ENCODE measurements at regions of chr16 and their contacts with region 1.

Region 1: GRCh38 chr16:67935402-67936123 is 1.1 kb downstream of the PSMB10 start:
- DNase-seq: peak; percentile 98
- ATAC-seq: peak; percentile 91
- H3K4me3 Mint-ChIP-seq: peak overlapping the region; percentile 100
- H3K27ac Mint-ChIP-seq: peak overlapping the region; percentile 100
- H3K4me1 Mint-ChIP-seq: peaks cover 37% of the 10 kb centered on the region
- H3K27me3 Mint-ChIP-seq: no peaks in the 10 kb centered on the region

Region 2: DNA sequence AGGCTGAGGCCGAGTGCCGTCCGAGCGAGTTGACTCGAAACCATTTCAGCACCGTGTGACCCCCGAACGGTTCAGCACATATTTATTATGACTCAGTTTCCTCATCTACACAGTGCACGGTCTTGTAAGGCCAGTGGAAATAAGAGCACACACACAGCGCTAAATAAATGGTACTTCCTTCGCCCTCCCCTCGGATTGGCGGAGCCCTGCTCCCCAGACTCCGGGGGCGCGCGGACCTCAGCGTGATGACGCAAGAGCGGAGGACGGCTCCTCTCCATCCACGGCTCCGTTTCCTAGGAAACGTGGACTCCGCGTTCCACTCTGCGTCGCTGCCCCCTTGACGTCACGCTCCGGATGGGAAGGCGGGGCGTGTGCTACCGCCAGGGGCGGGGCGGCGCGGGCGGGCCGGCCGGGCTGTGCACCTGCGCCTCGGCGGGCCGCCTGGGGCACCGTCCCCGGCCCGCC is 275.0 kb before region 1 on chr16 and contains the start of gene PARD6A:
- CTCF ChIA-PET with region 1: interaction called, 3 read pairs
- POLR2A ChIA-PET with region 1: interaction called, 5 read pairs
- intact Hi-C with region 1: loop called in 1 of 2 experiments (anchors 1 kb)
- DNase-seq: peak; percentile 98
- ATAC-seq: peak; percentile 83
- H3K4me3 Mint-ChIP-seq: peak within 1 kb of the TSS; percentile 90
- H3K27ac Mint-ChIP-seq: peak within 1 kb of the TSS; percentile 91
- H3K4me1 Mint-ChIP-seq: peaks cover 21% of the 10 kb centered on the region
- H3K27me3 Mint-ChIP-seq: no peaks in the 10 kb centered on the region
- total RNA-seq, gene PARD6A: 7.8 to 8.7 TPM

Region 3: GRCh38 chr16:67806428-67807147 is 129.0 kb before region 1 on chr16 and contains the starts of genes RANBP10 and TSNAXIP1:
- CTCF ChIA-PET with region 1: interaction called, 3 read pairs
- POLR2A ChIA-PET with region 1: interaction called, 8 read pairs
- intact Hi-C with region 1: loop called in 1 of 2 experiments (anchors 1 kb)
- DNase-seq: peak; percentile 98
- ATAC-seq: peak; percentile 96
- H3K4me3 Mint-ChIP-seq: peak within 1 kb of the TSS; percentile 91
- H3K27ac Mint-ChIP-seq: peak within 1 kb of the TSS; percentile 91
- H3K4me1 Mint-ChIP-seq: peaks cover 39% of the 10 kb centered on the region
- H3K27me3 Mint-ChIP-seq: no peaks in the 10 kb centered on the region
- total RNA-seq, gene RANBP10: 15.6 to 18.0 TPM
- total RNA-seq, gene TSNAXIP1: 0.62 to 1.1 TPM

Region 4: DNA sequence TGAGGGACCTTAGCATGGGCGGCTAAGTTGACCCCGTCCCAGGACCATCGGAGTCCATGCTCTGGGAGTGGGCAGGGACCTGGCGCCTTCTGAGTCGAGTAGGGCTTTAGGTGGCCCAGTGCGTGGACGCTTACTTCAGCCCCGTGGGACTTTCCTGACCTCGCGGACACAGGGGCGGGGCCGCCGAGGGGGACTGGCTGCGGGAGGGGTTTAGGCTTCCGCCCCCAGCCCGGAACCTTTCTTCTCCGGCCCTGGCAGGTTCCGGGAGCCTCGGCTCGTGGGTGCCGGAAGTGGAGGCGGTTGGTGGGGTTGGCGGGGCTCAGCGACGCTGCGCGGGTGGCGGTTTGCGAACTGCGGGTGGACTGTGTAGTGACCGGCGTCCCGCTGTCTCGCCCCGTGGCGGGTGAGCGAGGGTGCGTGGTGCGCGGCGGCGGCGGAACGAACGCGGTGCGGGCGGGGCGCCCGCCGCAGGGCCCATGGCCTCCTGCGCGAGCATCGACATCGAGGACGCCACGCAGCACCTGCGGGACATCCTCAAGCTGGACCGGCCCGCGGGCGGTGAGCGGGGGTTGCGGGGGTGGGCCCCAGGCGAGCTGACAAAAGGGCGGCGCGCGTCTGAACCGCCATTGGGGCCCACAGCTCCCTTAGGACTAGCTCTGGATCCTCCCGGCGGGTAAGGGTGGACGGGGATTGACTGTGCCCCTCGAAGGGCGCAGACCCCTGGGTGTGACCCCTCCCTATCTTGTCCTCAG is 62.6 kb before region 1 on chr16 and contains the start of gene EDC4:
- CTCF ChIA-PET with region 1: interaction called, 4 read pairs
- POLR2A ChIA-PET with region 1: interaction called, 7 read pairs
- intact Hi-C with region 1: loop called (anchors 1 kb)
- DNase-seq: peak; percentile 92
- ATAC-seq: peak; percentile 89
- H3K4me3 Mint-ChIP-seq: peak within 1 kb of the TSS; percentile 77
- H3K27ac Mint-ChIP-seq: peak within 1 kb of the TSS; percentile 92
- H3K4me1 Mint-ChIP-seq: peaks cover 30% of the 10 kb centered on the region
- H3K27me3 Mint-ChIP-seq: no peaks in the 10 kb centered on the region
- total RNA-seq, gene EDC4: 92.8 to 96.9 TPM

Region 5: DNA sequence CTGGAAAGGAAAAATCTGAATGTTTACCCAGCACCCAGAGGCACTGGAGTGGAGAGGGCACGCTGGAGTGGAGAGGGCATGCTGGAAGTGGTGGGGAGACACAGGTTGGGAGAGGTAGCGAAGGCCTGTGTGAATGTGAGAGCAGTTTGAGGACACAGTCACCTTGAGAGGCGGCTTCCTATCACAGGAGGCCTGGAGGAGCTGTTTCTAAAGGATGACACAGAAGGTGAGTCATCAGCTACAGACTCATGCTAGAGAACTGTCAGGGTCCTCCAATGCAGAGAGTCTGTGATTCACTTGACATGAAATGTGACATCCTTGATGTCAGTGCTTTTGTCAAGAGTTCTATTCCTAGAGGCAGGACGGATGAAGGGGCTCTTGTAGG is 17.7 kb before region 1 on chr16:
- CTCF ChIA-PET with region 1: interaction called, 10 read pairs
- POLR2A ChIA-PET with region 1: interaction called, 5 read pairs
- intact Hi-C with region 1: no loop called
- DNase-seq: peak; percentile 79
- ATAC-seq: peak; percentile 100
- H3K4me3 Mint-ChIP-seq: no peak overlapping the region
- H3K27ac Mint-ChIP-seq: peak overlapping the region; percentile 91
- H3K4me1 Mint-ChIP-seq: peaks cover 34% of the 10 kb centered on the region
- H3K27me3 Mint-ChIP-seq: no peaks in the 10 kb centered on the region

Region 6: DNA sequence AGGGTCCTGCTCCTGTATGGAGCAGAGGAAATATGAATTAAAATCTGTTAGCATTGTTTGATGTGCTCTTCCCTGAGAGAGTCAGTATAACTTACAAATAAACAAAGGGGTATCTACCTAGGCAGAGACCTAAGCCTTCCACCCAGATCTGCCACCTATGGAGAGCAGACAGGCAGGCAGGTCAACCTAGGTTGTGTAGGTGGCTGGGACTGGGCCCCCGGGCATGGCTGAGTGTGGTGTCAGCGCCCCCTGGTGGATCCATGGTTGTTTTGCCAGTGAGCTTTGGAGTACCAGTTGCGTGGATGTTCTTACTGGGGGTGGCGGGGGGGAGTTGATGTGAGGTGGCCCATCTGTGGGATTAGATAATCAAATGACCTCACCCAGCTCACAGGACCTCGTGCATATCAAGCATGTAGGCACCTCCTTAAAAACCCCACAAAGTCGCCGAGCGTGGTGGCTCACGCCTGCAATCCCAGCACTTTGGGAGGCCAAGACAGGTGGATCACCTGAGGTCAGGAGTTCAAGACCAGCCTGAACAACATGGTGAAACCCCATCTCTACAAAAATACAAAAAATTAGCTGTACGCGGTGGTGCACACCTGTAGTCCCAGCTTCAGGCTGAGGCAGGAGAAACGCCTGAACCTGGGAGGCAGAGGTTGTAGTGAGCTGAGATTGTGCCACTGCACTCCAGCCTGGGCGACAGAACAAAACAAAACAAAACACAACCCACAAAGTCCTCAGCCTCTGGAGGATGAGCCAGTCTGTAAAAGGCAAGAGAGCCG is 105.1 kb after region 1 on chr16:
- CTCF ChIA-PET with region 1: interaction called, 7 read pairs
- POLR2A ChIA-PET with region 1: interaction called, 3 read pairs
- intact Hi-C with region 1: loop called in 1 of 2 experiments (anchors 2 kb)
- DNase-seq: peak; percentile 94
- ATAC-seq: peak; percentile 98
- H3K4me3 Mint-ChIP-seq: no peak overlapping the region
- H3K27ac Mint-ChIP-seq: peak overlapping the region; percentile 31
- H3K4me1 Mint-ChIP-seq: peaks cover 7% of the 10 kb centered on the region
- H3K27me3 Mint-ChIP-seq: no peaks in the 10 kb centered on the region

Region 7: DNA sequence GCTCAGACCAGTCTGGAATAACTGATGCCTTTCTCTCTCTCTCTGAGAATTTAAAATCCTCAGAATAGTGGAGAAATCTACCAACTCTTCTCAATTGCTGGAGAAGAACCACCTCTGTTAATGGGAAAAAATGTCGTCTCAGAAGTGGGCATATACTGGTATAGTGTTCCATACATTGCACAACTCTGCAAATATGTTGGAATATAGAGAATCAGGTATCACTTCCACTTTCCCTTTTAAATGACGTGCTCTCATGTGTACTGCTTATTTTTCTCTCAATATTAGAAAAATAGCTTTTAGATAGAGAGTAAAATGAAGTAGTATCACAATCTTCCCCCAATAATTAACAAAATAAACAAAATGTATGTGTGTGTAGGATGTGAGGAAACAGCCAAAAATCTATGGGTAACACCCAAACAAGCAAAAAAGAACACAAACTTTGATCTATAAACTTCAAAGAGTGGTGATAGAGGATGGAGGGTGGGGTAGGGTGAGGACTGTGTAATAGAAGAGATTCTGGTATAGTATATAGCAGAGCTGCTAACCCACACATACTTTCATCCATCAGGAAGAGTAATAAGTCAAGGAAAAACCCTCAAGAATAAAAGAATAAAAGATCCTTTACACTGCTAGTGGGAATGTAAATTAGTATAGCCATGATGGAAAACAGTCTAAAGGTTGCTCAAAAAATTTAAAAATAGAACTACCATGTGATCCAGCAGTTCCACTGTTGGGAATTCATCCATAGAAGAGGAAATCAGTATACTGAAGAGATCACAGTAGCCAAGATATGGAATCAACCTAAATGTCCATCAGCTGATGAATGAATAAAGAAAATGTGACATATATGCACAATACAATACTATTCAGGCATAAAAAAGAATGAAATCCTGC is 196.5 kb after region 1 on chr16:
- CTCF ChIA-PET with region 1: no interaction called
- POLR2A ChIA-PET with region 1: no interaction called
- intact Hi-C with region 1: no loop called
- DNase-seq: no peak
- ATAC-seq: peak; percentile 47
- H3K4me3 Mint-ChIP-seq: peak overlapping the region; percentile 1
- H3K27ac Mint-ChIP-seq: peak overlapping the region; percentile 66
- H3K4me1 Mint-ChIP-seq: peaks cover 49% of the 10 kb centered on the region
- H3K27me3 Mint-ChIP-seq: no peaks in the 10 kb centered on the region

Measured in activated CD4-positive, alpha-beta T cell treated with anti-CD3 and anti-CD28 coated beads for 36 hours (primary cell).